ENCODE measurements at regions of chr3 and their contacts with region 1.

Region 1: GRCh38 chr3:157130467-157131251 is 29.3 kb downstream of the CCNL1 start:
- DNase-seq: peak; percentile 81 to 94 (median 84)
- H3K4me3 ChIP-seq: peak overlapping the region; percentile 4 to 45
- H3K4me3 Mint-ChIP-seq: peak overlapping the region; percentile 50 to 91 (median 76)
- H3K27ac ChIP-seq: peak overlapping the region; percentile 83
- H3K27ac Mint-ChIP-seq: peak overlapping the region; percentile 95 to 99 (median 97)
- H3K4me1 ChIP-seq: peaks cover 73% of the 10 kb centered on the region
- H3K4me1 Mint-ChIP-seq: peaks cover 48 to 86% (median 66%) of the 10 kb centered on the region in 4 donors
- H3K27me3 ChIP-seq: no peaks in the 10 kb centered on the region
- H3K27me3 Mint-ChIP-seq: no peaks in the 10 kb centered on the region

Region 2: DNA sequence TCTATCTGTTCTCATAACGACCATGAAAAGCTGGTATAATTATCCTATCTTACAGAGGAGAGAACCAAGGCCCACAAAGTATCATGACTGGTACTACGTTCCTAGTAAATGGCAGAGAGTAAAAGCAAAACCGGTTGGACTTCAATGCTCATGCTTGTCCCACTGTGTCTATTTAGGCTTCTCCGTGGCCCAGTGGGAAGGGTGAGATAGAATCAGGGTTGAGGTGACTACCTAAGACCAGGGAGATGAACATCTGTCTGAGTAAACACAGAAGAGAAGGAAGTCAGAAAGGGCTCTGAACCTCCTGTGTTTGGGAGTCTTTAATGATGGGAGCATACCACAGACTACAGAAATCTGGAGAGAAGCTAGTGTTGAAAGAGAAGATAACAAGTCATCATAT is 187.2 kb before region 1 on chr3:
- CTCF ChIA-PET with region 1: no interaction called
- POLR2A ChIA-PET with region 1: no interaction called
- intact Hi-C with region 1: no loop called
- DNase-seq: no peak
- H3K4me3 ChIP-seq: no peak overlapping the region
- H3K4me3 Mint-ChIP-seq: no peak overlapping the region
- H3K27ac ChIP-seq: no peak overlapping the region
- H3K27ac Mint-ChIP-seq: no peak overlapping the region
- H3K4me1 ChIP-seq: no peaks in the 10 kb centered on the region
- H3K4me1 Mint-ChIP-seq: no peaks in the 10 kb centered on the region
- H3K27me3 ChIP-seq: no peaks in the 10 kb centered on the region
- H3K27me3 Mint-ChIP-seq: peaks cover 0 to 10% of the 10 kb centered on the region in 2 donors

Region 3: DNA sequence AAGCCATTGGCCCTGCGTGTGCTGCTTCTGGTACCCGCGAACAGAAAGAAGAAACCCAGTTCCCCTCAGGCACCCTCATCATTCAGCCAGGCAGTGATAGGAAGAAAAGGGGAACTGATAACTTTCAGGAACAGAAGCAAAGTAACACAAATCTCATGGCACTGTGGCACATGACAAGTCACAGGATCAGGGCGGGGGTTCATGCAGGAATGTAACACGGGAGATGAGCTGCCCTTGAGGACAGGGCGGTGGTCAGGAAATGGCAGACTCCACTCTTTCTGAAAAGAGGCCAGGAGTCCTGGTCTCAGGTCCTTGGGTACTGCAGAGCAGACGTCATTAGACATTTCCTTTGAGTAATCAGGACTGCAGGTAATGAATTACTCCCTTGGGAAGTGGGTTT is 66.3 kb before region 1 on chr3:
- CTCF ChIA-PET with region 1: interaction called, 14 read pairs
- POLR2A ChIA-PET with region 1: interaction called, 5 read pairs
- intact Hi-C with region 1: no loop called
- DNase-seq: no peak
- H3K4me3 ChIP-seq: no peak overlapping the region
- H3K4me3 Mint-ChIP-seq: no peak overlapping the region
- H3K27ac ChIP-seq: no peak overlapping the region
- H3K27ac Mint-ChIP-seq: peak overlapping the region in 3 of 7 donors; percentile 39 to 70 (median 42)
- H3K4me1 ChIP-seq: peaks cover 38% of the 10 kb centered on the region
- H3K4me1 Mint-ChIP-seq: peaks cover 23 to 45% (median 36%) of the 10 kb centered on the region in 4 donors
- H3K27me3 ChIP-seq: no peaks in the 10 kb centered on the region
- H3K27me3 Mint-ChIP-seq: peaks cover 0 to 2% of the 10 kb centered on the region in 2 donors

Region 4: GRCh38 chr3:157113832-157114505 is 16.7 kb before region 1 on chr3:
- CTCF ChIA-PET with region 1: interaction called, 9 read pairs
- POLR2A ChIA-PET with region 1: interaction called, 3 read pairs
- intact Hi-C with region 1: loop called (anchors 2 kb)
- DNase-seq: no peak
- H3K4me3 ChIP-seq: no peak overlapping the region
- H3K4me3 Mint-ChIP-seq: no peak overlapping the region
- H3K27ac ChIP-seq: no peak overlapping the region
- H3K27ac Mint-ChIP-seq: peak overlapping the region in 2 of 7 donors; percentile 15 to 32
- H3K4me1 ChIP-seq: no peaks in the 10 kb centered on the region
- H3K4me1 Mint-ChIP-seq: peaks cover 0 to 4% (median 0%) of the 10 kb centered on the region in 4 donors
- H3K27me3 ChIP-seq: no peaks in the 10 kb centered on the region
- H3K27me3 Mint-ChIP-seq: peaks cover 0 to 4% of the 10 kb centered on the region in 2 donors

Region 5: DNA sequence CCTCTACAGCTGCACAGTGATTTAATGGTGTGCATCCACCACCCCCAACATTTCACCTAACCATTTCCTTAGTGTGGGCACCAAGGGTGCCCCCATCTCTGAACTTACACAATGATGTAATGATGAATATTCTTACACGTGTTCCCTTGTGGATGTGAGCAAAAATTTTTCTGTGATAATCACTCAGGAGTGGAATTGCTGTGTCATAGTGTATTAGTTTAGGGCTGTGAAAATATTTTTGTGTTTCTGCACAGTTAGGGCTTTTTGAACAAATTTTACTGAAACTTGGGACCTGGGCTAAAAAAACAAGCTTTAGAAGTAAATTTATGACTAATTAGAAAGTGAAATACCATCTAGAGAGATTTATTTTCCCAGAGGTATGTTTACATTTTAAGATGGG is 163.8 kb after region 1 on chr3:
- CTCF ChIA-PET with region 1: no interaction called
- POLR2A ChIA-PET with region 1: no interaction called
- intact Hi-C with region 1: no loop called
- DNase-seq: no peak
- H3K4me3 ChIP-seq: no peak overlapping the region
- H3K4me3 Mint-ChIP-seq: no peak overlapping the region
- H3K27ac ChIP-seq: no peak overlapping the region
- H3K27ac Mint-ChIP-seq: no peak overlapping the region
- H3K4me1 ChIP-seq: no peaks in the 10 kb centered on the region
- H3K4me1 Mint-ChIP-seq: no peaks in the 10 kb centered on the region
- H3K27me3 ChIP-seq: no peaks in the 10 kb centered on the region
- H3K27me3 Mint-ChIP-seq: no peaks in the 10 kb centered on the region

Region 6: DNA sequence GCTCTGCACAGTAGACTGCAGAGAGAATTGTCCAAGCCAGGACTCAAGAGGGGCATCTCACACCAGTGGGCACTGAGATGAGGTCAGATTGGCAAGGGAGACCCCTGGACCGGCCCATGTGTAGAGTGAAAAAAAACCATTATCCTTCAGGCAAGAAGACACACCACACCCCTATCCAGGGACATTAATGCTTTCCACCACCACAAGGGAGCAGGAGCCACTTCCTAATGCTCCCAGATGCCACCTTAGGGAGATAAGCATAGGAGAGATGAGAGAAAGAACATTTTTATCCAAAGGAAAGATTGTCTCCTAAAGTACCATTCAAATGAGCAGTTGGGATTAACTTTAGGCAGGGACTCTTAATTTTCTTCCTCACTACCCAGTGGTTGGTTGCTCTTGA is 196.4 kb after region 1 on chr3:
- CTCF ChIA-PET with region 1: no interaction called
- POLR2A ChIA-PET with region 1: no interaction called
- intact Hi-C with region 1: no loop called
- DNase-seq: no peak
- H3K4me3 ChIP-seq: no peak overlapping the region
- H3K4me3 Mint-ChIP-seq: no peak overlapping the region
- H3K27ac ChIP-seq: no peak overlapping the region
- H3K27ac Mint-ChIP-seq: no peak overlapping the region
- H3K4me1 ChIP-seq: no peaks in the 10 kb centered on the region
- H3K4me1 Mint-ChIP-seq: peaks cover 0 to 4% (median 2%) of the 10 kb centered on the region in 4 donors
- H3K27me3 ChIP-seq: no peaks in the 10 kb centered on the region
- H3K27me3 Mint-ChIP-seq: peaks cover 0 to under 1% of the 10 kb centered on the region in 2 donors